ENCODE measurements at regions of chr2 and their contacts with region 1.

Region 1: DNA sequence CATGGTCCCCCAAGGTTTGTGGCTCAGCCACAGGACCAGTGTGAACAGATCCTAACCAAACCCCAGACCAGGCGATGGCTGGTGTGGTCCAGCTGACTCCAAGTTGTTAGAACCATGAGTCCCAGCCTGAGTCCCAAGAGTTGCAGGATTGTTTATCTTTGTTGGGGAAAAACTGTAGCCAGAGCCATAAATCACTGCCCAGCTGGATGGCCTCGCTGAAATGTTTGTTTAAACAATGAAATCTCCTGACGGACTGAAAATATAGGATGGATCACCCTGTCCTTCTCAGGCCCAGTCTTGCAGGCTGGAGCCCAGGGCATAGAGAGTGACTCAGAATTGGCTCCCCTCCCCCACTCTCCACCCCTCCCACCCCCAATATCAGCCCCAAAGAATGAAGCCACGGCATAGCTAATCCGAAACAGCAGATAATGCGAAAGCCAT is 36.4 kb downstream of the PKDCC start:
- DNase-seq: no peak
- H3K4me3 ChIP-seq: no peak overlapping the region
- CTCF ChIP-seq: no peak
- POLR2A ChIP-seq: no peak

Region 2: GRCh38 chr2:41764930-41765329 is 319.3 kb before region 1 on chr2:
- intact Hi-C with region 1: no loop called
- DNase-seq: no peak
- H3K4me3 ChIP-seq: no peak overlapping the region
- CTCF ChIP-seq: no peak
- POLR2A ChIP-seq: no peak

Region 3: GRCh38 chr2:41853427-41854216 is 230.6 kb before region 1 on chr2:
- intact Hi-C with region 1: loop called (anchors 5 kb)
- DNase-seq: peak in 1 of 2 donors; percentile 50
- H3K4me3 ChIP-seq: no peak overlapping the region
- CTCF ChIP-seq: no peak
- POLR2A ChIP-seq: no peak

Region 4: DNA sequence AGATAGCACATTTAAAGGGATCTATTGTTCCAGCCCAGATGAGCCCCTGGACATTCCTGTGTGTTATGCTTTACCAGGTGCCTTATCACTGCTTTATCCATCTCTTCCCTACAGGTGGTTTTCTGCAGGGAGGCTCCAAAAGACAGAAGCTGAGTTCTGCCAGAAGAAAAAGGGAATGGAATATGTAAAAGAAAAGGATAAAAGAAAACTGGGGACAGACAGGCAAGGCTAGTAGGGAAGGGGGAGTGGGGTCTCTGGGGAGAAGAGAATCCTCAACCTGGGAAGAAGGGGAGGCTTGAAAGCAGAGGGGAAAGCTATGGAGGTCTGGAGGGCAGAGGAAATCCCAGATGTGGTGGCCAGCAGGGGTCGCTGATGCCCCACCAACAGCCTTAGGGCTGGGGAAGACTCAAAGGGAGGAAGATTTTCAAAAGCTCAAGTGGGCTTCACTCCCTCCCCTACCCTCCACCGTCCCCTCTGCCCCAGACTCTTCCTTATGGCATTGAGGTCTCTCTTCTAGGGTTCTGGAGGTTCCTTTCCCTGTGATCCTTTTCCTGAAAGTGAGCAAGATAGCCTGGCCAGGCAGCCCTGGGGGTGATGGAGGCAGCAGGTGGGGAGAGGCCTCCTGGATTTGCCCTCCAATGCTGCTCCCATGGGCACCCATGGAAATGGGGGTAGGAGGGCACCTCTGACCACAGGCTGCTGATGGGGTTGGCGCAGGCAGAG is 214.5 kb before region 1 on chr2:
- intact Hi-C with region 1: loop called (anchors 1 kb)
- DNase-seq: peak; percentile 55 to 96
- H3K4me3 ChIP-seq: no peak overlapping the region
- CTCF ChIP-seq: peak in 1 of 3 donors; percentile 84
- POLR2A ChIP-seq: no peak

Measured in lower leg skin (tissue), 4 donors.